Endothelial cell of umbilical vein (primary cell): ENCODE measurements at regions of chr16 and their contacts with region 1.

Region 1: DNA sequence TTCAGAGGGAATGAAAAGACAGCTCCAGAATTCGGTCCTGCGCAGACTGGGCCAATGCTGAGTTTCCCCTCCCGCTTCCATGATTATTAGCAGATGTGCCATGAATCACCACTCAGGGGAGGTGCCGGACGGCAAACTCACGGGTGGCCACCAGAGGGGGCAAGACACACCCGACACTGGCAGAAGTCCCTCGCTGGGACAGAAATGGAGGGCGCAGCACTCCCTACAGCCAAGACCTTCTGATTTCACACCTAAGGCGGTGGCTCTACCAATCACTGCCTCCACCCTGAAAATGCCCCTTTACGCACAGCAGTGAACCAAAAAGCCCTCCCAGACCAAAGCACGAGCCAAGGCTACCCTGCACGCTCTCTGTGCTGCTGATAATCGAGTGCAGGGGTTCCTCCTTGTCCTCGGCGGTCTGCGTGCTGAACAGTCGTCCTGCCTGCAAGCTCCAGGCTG is 26.8 kb downstream of the TRAP1 start:
- DNase-seq: peak; percentile 94
- H3K4me3 ChIP-seq: no peak overlapping the region
- H3K27ac ChIP-seq: no peak overlapping the region
- H3K4me1 ChIP-seq: no peaks in the 10 kb centered on the region
- H3K27me3 ChIP-seq: no peaks in the 10 kb centered on the region
- CTCF ChIP-seq: peak; percentile 95 to 96
- POLR2A ChIP-seq: no peak

Region 2: GRCh38 chr16:3677994-3678393 is 12.5 kb before region 1 on chr16:
- CTCF ChIA-PET with region 1: interaction called, 29 read pairs
- POLR2A ChIA-PET with region 1: interaction called, 4 read pairs
- dilution Hi-C with region 1: no loop called
- intact Hi-C with region 1: loop called (anchors 1 kb)
- DNase-seq: no peak
- H3K4me3 ChIP-seq: no peak overlapping the region
- H3K27ac ChIP-seq: no peak overlapping the region
- H3K4me1 ChIP-seq: peaks cover 12% of the 10 kb centered on the region
- H3K27me3 ChIP-seq: no peaks in the 10 kb centered on the region
- CTCF ChIP-seq: no peak
- POLR2A ChIP-seq: no peak

Region 3: DNA sequence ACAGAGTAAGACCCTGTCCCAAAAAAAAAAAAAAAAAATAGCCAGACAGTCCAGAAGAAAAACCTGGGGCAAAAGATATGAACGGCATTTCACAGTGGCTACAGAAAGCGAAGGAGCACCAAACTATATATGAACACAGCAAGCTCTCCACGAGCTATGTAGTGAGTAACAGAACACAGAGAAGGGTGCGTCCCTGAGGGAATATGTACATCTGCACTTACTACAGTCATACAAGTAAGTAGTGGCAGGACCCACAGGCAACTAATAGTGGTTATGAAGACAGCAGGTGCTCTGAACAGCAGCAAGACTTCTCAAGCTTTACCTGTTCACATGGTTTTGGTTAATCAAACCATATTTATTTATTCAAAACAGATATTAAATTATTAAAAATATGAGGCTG is 11.0 kb after region 1 on chr16:
- CTCF ChIA-PET with region 1: interaction called, 24 read pairs
- POLR2A ChIA-PET with region 1: no interaction called
- dilution Hi-C with region 1: no loop called
- intact Hi-C with region 1: no loop called
- DNase-seq: no peak
- H3K4me3 ChIP-seq: no peak overlapping the region
- H3K27ac ChIP-seq: no peak overlapping the region
- H3K4me1 ChIP-seq: no peaks in the 10 kb centered on the region
- H3K27me3 ChIP-seq: no peaks in the 10 kb centered on the region
- CTCF ChIP-seq: no peak
- POLR2A ChIP-seq: no peak

Region 4: DNA sequence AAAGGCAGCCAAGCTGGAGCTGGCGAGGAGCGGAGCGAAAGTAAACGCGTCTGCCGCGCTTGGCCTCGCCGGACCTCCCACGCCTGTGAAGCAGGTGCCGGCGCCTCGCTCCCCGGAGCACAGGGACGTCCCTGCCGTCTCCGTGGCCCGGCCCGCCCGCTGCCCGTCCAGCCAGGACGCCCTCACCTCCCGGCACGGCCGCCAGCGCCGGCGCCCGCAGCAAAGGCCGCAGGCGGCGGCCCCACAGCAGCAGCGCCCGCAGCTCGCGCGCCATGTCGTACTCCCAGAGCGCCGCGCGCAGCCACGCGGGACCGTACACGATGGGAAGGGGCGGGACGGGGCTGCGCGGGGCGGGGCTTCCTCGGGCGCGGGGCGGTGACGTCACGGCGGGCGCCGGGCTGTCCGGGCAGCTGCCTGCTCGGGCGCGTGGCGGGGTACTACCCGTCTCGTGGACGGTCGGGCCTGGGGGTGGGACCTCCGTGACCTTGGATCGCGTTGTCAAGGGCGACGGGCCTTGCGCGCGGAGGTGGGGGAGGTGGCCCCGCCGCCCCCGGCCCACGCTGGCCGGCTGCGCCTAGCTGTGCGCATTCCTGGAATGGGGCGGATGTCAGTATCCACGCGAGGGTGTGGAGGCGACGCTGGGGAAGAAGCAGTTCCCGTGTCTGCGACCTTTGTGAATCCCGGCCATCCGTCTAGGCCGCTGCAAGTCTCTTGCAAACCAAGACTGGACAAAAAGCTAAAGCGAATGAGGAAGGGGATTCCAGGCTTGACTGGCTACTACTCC is 26.9 kb after region 1 on chr16 and contains the start of gene TRAP1:
- CTCF ChIA-PET with region 1: interaction called, 11 read pairs
- POLR2A ChIA-PET with region 1: no interaction called
- dilution Hi-C with region 1: no loop called
- intact Hi-C with region 1: loop called (anchors 1 kb)
- DNase-seq: peak; percentile 83
- H3K4me3 ChIP-seq: peak within 1 kb of the TSS; percentile 51 to 96 (median 79)
- H3K27ac ChIP-seq: peak within 1 kb of the TSS; percentile 71
- H3K4me1 ChIP-seq: peaks cover 14% of the 10 kb centered on the region
- H3K27me3 ChIP-seq: no peaks in the 10 kb centered on the region
- CTCF ChIP-seq: no peak
- POLR2A ChIP-seq: peak; percentile 86
- total RNA-seq, gene TRAP1: 102 and 109 TPM in 2 replicates

Region 5: DNA sequence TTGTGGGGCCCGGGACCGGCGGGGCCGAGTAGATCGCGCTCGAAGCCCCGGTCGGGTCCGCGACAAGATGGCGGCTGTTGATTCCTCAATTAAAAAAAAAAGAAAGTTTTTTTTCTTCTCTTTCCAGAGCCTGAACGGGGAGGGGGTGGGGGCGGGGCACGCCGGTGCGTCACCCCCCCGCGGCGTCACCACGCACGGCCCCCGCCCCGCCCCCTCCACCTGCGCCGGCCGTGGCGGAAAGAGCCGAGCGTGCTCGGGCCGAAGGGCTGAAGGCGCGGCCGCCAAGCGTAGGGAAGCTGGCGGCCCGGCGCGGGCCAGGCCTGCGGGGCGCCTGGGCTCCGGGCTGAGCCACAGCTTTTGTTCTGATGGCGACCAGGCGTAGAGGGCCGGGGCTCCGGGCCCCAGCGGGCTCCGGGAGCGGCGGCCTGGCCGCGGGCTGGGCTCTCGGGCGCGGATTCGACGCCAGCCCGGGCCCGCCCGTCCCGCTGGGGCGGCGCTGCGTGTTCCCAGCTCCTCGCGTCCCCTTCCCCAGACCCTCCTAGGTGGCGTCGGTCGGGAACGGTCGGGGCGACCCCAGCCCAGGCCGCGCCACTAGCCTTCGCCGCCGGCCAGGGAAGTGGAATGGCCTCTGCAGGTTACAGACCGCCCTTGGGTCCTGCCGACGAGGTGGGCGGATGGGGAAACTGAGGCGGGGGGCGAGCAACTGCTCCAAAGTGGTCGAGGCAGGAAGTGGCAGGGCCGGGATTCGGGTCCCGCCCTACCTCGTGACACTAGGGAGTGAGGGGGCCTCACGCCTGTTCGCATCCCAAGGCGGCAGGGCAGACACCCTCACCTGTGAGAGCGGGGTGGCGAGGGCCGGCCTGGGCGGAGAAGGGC is 190.4 kb after region 1 on chr16 and contains the start of gene CREBBP:
- CTCF ChIA-PET with region 1: interaction called, 10 read pairs
- POLR2A ChIA-PET with region 1: no interaction called
- dilution Hi-C with region 1: no loop called
- intact Hi-C with region 1: loop called (anchors 1 kb)
- DNase-seq: peak; percentile 87
- H3K4me3 ChIP-seq: peak within 1 kb of the TSS; percentile 12 to 94 (median 84)
- H3K27ac ChIP-seq: peak within 1 kb of the TSS; percentile 67
- H3K4me1 ChIP-seq: peaks cover 8% of the 10 kb centered on the region
- H3K27me3 ChIP-seq: no peaks in the 10 kb centered on the region
- CTCF ChIP-seq: no peak
- POLR2A ChIP-seq: peak; percentile 95
- total RNA-seq, gene CREBBP: 71.4 and 72.7 TPM in 2 replicates

Region 6: DNA sequence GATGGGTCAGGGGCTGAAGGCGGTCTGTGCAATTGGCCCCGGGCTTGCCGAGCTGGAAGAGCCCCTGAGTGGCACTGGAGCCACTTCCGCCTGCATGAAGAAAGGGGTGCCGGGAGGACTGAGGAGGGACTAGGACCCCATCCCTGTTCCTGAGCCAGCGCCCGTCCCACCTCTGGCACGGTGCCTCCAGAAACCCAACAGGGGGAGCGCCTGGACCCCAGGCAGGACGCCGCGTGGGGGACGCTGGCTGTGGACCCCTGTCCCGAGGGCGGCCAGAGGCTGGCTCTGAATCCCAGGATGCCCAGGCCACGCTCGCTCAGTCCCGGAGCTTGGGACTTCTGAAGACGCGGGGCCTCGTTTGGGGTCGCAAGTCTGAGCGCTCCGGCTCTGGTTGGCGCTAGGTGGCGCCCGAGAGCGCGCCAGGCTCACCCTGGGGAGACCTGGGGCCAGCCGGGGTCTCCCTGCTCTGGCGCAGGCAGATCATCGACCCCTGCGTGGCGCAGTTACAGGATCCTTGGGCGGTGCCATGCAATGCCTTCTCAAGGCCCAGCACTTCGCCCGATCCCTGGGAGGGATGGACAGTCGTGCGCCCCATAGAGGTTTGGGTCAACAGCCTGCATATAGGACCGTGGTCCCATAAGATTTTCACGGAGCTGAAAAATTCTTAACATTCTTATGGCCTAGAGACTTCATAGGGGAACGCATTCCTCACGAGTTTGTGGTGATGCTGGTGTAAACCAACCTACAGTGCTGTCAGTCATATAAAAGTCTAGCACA is 248.5 kb after region 1 on chr16:
- CTCF ChIA-PET with region 1: no interaction called
- POLR2A ChIA-PET with region 1: no interaction called
- dilution Hi-C with region 1: no loop called
- intact Hi-C with region 1: loop called (anchors 2 kb)
- DNase-seq: peak; percentile 55
- H3K4me3 ChIP-seq: peak overlapping the region in 1 of 3 experiments; percentile 29
- H3K27ac ChIP-seq: no peak overlapping the region
- H3K4me1 ChIP-seq: peaks cover 3% of the 10 kb centered on the region
- H3K27me3 ChIP-seq: peaks cover 0 to 2% of the 10 kb centered on the region in 2 experiments
- CTCF ChIP-seq: peak; percentile 90 to 97
- POLR2A ChIP-seq: no peak